HCT116 (cell line): ENCODE measurements at regions of chr3 and their contacts with region 1.

Region 1: DNA sequence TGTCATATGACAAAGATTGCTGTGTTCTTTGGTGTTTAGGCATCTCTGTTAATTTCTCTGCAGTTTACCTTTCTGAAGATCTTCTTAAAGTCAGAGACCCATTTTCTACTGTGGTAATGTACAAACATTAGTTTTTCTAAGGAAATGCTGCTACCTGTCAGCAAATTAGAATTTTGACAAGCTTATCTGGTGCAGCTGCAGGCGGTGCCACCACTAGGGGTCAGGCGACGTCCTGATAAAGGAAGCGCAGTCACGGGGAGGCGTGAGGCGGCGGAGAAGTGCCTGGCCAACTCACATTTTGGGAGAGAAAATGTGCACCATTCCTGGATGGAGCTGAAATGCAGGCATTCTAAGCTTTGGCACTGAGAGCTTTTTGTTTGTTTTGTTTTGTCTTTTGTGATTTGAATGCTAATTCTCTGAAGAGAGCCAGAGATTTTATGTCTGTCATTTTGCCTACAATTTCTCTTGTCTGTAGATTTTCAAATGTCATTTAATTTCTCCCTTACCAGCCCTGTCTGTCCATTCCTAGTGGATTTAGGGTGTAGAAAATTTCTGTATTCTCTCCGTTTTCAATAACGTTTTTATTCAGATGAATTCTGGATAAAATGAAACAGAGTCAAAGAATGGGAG is 24.9 kb upstream of the SIAH2 start:
- DNase-seq: peak; percentile 69
- ATAC-seq: peak; percentile 95
- H3K4me3 ChIP-seq: no peak overlapping the region
- H3K27ac ChIP-seq: no peak overlapping the region
- H3K4me1 ChIP-seq: peaks cover 0 to 14% of the 10 kb centered on the region in 2 experiments; a peak in 2 of 4 replicates
- H3K27me3 ChIP-seq: no peaks in the 10 kb centered on the region
- CTCF ChIP-seq: peak; percentile 81 to 98 (median 94)
- POLR2A ChIP-seq: no peak
- RAD21 ChIP-seq: peak; percentile 92

Region 2: DNA sequence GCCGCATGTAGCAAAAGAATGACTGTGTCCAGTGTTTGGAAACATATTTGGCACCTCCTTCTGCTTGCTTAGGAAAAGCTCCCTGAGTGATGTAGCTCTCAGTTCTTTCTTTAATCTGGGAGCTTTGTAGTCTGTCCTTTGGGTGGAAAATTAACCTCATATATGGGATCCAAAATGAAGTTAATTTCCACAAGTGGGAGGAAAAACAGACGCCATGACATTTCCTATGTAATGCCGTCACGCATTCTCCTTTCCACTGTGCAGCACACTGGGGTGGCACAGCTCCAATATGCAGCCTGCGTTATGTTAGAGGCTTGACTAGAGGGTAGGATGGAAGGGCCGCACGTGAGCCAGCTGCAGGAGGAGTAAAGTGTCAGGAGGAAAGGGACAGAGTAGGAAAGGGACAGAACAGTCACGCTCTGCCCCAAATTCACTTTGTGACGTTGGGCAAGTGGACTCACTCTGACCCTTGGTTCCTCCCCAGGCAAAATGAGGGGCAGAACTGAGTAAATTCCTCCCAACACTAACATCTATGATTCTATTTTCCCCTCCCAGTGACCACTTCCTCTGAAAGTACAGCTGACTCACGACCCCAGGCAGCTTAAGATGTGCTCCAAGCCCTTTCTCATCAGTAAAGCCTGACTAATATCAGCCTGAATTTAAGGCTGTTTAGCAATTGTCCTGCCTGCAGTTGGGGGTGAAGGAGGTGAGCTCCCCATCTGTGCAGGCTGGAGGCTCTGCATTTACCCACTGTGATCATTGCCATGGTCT is 640.7 kb before region 1 on chr3:
- CTCF ChIA-PET with region 1: no interaction called
- POLR2A ChIA-PET with region 1: no interaction called
- RAD21 ChIA-PET with region 1: no interaction called
- intact Hi-C with region 1: no loop called
- DNase-seq: no peak
- ATAC-seq: no peak
- H3K4me3 ChIP-seq: no peak overlapping the region
- H3K27ac ChIP-seq: no peak overlapping the region
- H3K4me1 ChIP-seq: peaks cover 5% of the 10 kb centered on the region in 2 experiments; a peak in 3 of 4 replicates
- H3K27me3 ChIP-seq: no peaks in the 10 kb centered on the region
- CTCF ChIP-seq: no peak
- POLR2A ChIP-seq: no peak
- RAD21 ChIP-seq: no peak

Region 3: DNA sequence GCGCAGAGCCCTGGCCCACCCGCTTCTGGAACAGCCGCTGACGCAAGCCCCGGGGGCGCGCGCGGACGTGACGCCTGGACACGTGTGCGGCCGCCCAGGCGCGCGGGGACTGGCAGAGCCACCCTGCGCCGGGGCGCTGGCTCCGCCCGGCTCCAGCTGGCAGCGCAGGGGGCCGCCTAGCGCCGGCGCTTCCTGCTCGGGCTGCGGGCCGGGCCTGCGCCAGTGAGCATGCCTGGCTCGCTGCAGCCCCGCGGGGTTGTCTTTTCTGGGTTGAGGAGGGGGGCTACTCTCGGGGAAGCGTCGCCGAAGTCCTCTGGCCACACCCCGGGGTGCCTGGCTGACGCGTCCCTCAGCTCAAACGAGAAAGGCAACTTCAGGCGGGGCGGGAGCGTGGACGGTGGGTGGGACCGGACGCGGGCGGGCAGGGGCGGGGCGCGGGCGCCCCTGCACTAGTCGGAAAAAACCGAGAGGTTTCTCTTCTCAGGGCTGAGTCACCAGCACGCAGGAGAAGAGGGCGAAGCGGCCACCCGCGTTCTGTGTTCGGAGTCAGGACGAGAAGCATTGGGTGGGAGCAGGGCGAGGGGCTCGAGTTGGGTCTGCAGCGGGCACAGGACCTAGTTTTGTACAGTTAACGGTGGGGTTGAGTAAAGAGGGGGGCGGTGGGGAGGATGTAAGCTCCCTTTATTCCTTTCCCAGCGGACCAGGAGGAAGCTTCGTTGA is 24.6 kb before region 1 on chr3 and contains the start of gene SIAH2:
- CTCF ChIA-PET with region 1: interaction called, 10 read pairs
- POLR2A ChIA-PET with region 1: interaction called, 9 read pairs
- RAD21 ChIA-PET with region 1: no interaction called
- intact Hi-C with region 1: no loop called
- DNase-seq: peak; percentile 89
- ATAC-seq: peak; percentile 81
- H3K4me3 ChIP-seq: peak within 1 kb of the TSS; percentile 72 to 91
- H3K27ac ChIP-seq: peak within 1 kb of the TSS; percentile 92
- H3K4me1 ChIP-seq: peaks cover 31 to 54% of the 10 kb centered on the region in 2 experiments
- H3K27me3 ChIP-seq: no peaks in the 10 kb centered on the region
- CTCF ChIP-seq: no peak
- POLR2A ChIP-seq: peak; percentile 75
- RAD21 ChIP-seq: no peak
- total RNA-seq, gene SIAH2: 39.9 TPM

Region 4: DNA sequence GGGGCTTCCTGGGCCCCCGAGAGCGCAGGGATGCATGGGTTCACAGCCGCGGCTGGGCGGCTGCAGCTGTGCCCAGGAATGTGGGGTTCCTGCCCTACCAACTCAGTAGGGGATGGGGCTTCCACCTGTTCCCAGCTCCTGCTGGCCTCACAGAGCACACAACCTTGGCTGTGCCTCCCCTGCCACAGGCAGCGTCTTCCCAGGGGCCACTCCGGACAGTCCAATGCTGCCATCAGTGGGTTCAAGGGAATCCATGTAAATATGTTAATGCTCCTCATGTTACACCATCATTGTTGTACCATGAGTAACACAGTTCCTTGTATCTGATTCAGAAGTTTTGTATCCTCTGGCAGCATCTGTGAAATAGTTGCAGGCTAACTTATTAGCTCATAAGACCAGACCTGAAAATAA is 12.8 kb before region 1 on chr3:
- CTCF ChIA-PET with region 1: interaction called, 13 read pairs
- POLR2A ChIA-PET with region 1: no interaction called
- RAD21 ChIA-PET with region 1: no interaction called
- intact Hi-C with region 1: no loop called
- DNase-seq: no peak
- ATAC-seq: no peak
- H3K4me3 ChIP-seq: no peak overlapping the region
- H3K27ac ChIP-seq: no peak overlapping the region
- H3K4me1 ChIP-seq: no peaks in the 10 kb centered on the region
- H3K27me3 ChIP-seq: no peaks in the 10 kb centered on the region
- CTCF ChIP-seq: no peak
- POLR2A ChIP-seq: no peak
- RAD21 ChIP-seq: no peak

Region 5: GRCh38 chr3:151316267-151316991 is 528.6 kb after region 1 on chr3 and contains the start of gene GPR87:
- CTCF ChIA-PET with region 1: no interaction called
- POLR2A ChIA-PET with region 1: no interaction called
- RAD21 ChIA-PET with region 1: no interaction called
- intact Hi-C with region 1: no loop called
- DNase-seq: peak; percentile 88
- ATAC-seq: peak; percentile 97
- H3K4me3 ChIP-seq: peak within 1 kb of the TSS; percentile 25 to 53
- H3K27ac ChIP-seq: peak within 1 kb of the TSS; percentile 66; the same call in 1 of the 2 replicates
- H3K4me1 ChIP-seq: peaks cover 44 to 52% of the 10 kb centered on the region in 2 experiments
- H3K27me3 ChIP-seq: no peaks in the 10 kb centered on the region
- CTCF ChIP-seq: no peak
- POLR2A ChIP-seq: no peak
- RAD21 ChIP-seq: peak; percentile 13; the same call in 1 of the 2 replicates
- total RNA-seq, gene GPR87: 3.8 TPM

Region 6: DNA sequence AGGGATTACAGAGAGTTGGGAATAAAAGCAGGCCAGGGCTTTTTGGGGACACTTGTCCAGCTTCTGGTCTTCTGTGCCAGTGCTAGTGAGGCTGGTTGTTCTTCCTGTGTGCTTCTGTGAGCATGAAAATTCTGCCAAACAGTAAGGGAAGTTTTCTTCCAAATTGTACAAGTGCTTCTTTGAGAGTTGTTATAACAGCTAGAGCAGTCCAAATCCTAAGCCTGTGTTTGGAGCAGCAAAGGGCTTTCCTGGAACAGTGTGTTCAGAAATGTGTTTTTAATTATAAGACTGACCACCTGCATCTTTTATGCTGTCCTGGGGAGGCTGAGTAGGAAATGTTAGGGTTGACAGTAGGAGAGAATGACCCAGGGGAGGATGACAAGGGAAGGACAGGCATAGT is 1824.0 kb after region 1 on chr3:
- CTCF ChIA-PET with region 1: no interaction called
- POLR2A ChIA-PET with region 1: no interaction called
- RAD21 ChIA-PET with region 1: no interaction called
- intact Hi-C with region 1: no loop called
- DNase-seq: no peak
- ATAC-seq: no peak
- H3K4me3 ChIP-seq: no peak overlapping the region
- H3K27ac ChIP-seq: no peak overlapping the region
- H3K4me1 ChIP-seq: no peaks in the 10 kb centered on the region
- H3K27me3 ChIP-seq: no peaks in the 10 kb centered on the region
- CTCF ChIP-seq: no peak
- POLR2A ChIP-seq: no peak
- RAD21 ChIP-seq: no peak

Region 7: GRCh38 chr3:152676810-152677379 is 1889.0 kb after region 1 on chr3:
- CTCF ChIA-PET with region 1: no interaction called
- POLR2A ChIA-PET with region 1: no interaction called
- RAD21 ChIA-PET with region 1: no interaction called
- intact Hi-C with region 1: no loop called
- DNase-seq: no peak
- ATAC-seq: no peak
- H3K4me3 ChIP-seq: no peak overlapping the region
- H3K27ac ChIP-seq: no peak overlapping the region
- H3K4me1 ChIP-seq: no peaks in the 10 kb centered on the region
- H3K27me3 ChIP-seq: no peaks in the 10 kb centered on the region
- CTCF ChIP-seq: no peak
- POLR2A ChIP-seq: no peak
- RAD21 ChIP-seq: no peak